ENCODE measurements at regions of chr9 and their contacts with region 1.

Region 1: DNA sequence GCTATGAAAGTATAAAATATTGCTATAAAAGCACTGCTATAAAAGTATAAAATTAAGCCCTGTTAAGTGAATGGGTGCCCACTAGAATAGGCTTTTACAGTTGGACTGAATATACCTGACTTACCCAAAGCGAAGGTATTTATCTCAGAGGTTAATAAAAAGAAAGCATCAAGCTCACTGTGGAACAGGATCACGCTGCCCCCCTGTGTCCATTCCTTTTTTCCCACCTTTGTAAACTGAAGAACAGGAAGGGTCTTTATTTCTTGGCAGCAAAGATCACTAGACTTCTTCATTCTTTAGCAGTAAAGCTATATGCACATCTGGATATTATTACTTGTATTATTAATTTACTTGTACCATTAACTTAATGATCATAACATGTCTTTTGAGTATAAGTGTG is 22.1 kb upstream of the PLPP6 start:
- DNase-seq: peak; percentile 32
- CTCF ChIP-seq: peak; percentile 23

Region 2: DNA sequence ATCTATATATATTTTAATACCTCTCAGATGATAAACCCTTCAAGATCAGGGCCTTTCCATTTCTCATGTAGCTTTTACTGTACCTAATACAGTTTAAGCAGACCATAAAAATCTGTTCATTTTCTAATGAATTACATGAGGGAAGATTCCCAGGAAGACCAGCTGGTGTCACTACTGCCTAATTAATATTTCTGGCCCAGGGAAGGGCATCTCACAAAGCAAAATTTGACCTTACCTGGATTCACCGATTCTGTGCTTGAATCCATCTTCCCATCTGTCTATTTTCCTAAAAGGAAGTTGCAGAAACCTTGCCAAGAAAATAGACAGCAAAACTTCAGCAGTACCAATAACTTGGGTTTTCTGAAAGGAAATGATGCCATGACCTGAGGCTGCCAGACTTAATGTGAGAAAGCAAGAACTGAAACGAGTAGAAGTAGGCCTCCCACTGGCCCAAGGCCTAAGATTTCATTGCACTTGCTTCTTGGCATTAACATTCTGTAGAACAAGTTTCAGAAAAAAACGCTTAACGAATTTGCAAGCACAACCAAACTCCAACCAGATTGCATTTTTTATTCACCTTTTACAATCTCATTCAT is 257.2 kb before region 1 on chr9:
- in situ Hi-C with region 1: loop called (anchors 25 kb)
- DNase-seq: peak; percentile 30
- CTCF ChIP-seq: peak; percentile 59

Region 3: GRCh38 chr9:4725706-4726442 is 85.8 kb after region 1 on chr9:
- in situ Hi-C with region 1: no loop called
- DNase-seq: no peak
- CTCF ChIP-seq: no peak

Region 4: GRCh38 chr9:4740638-4741364 is 100.8 kb after region 1 on chr9 and contains the start of gene AK3:
- in situ Hi-C with region 1: no loop called
- DNase-seq: peak; percentile 98
- CTCF ChIP-seq: peak; percentile 42

Measured in GM13976 (cell line).